Thyroid gland (tissue), 4 donors: ENCODE measurements at regions of chr5 and their contacts with region 1.

Region 1: DNA sequence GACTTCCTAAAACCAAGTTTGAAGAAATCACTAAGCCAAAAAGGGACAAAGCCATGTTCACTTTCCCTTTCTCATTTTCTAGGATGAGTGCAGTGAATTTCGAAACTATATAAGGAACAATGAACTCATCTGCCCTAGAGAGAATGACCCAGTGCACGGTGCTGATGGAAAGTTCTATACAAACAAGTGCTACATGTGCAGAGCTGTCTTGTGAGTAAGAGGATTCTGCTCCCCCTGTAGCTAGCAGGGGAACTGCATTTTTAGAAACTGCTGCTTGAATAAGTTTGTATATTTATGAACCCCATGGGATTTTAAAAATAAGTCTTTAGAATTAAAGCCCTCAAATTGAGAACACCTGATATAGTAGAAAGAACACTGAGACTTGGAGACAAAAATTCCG is 42.7 kb upstream of the SPINK14 start:
- DNase-seq: no peak
- H3K4me3 ChIP-seq: no peak overlapping the region
- H3K27ac ChIP-seq: no peak overlapping the region
- H3K4me1 ChIP-seq: no peaks in the 10 kb centered on the region
- H3K27me3 ChIP-seq: no peaks in the 10 kb centered on the region
- CTCF ChIP-seq: peak in 4 of 6 experiments; percentile 9 to 25 (median 19)
- POLR2A ChIP-seq: no peak

Region 2: DNA sequence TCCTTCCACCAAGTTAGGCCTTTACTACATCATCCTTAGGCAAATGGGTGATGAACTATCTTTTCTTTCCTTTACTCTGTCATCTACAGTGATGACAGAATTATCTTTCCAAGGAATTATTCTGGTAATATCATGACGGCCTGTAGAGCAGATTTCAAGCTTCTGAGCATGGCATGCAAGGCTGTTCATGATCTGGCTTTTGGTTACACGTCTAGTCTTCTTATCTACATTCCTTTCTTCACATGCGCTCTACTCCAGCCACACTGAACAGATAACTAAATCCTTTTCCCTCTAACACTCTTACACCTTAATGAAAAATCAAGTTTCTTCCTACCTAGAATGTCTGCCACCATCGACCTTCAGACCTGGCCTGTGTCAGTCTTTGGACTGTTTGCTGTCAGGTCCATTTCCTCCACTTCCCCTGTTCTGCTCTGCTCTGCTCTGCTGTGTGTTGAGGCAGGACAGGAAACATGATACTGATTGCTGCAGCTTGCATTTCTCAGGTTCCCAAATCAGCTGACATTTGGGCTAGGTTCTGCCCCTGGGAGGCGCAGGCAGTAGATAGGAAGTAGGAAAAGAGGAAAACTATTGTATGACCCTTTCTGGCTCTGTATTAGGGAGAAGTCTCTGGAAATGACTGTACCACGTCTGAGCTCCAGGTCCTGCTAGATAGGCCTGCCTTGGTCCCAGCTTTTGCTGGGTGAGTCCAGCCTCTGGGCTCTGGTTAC is 242.9 kb before region 1 on chr5:
- intact Hi-C with region 1: no loop called
- DNase-seq: no peak
- H3K4me3 ChIP-seq: no peak overlapping the region
- H3K27ac ChIP-seq: no peak overlapping the region
- H3K4me1 ChIP-seq: peaks cover 8% of the 10 kb centered on the region in 2 donors
- H3K27me3 ChIP-seq: no peaks in the 10 kb centered on the region
- CTCF ChIP-seq: no peak
- POLR2A ChIP-seq: no peak

Region 3: GRCh38 chr5:147949711-147950573 is 175.7 kb before region 1 on chr5:
- intact Hi-C with region 1: loop called (anchors 10 kb)
- DNase-seq: no peak
- H3K4me3 ChIP-seq: no peak overlapping the region
- H3K27ac ChIP-seq: no peak overlapping the region
- H3K4me1 ChIP-seq: no peaks in the 10 kb centered on the region
- H3K27me3 ChIP-seq: no peaks in the 10 kb centered on the region
- CTCF ChIP-seq: peak; percentile 23 to 77 (median 64)
- POLR2A ChIP-seq: no peak